HCT116 (cell line): ENCODE measurements at regions of chr2 and their contacts with region 1.

Region 1: DNA sequence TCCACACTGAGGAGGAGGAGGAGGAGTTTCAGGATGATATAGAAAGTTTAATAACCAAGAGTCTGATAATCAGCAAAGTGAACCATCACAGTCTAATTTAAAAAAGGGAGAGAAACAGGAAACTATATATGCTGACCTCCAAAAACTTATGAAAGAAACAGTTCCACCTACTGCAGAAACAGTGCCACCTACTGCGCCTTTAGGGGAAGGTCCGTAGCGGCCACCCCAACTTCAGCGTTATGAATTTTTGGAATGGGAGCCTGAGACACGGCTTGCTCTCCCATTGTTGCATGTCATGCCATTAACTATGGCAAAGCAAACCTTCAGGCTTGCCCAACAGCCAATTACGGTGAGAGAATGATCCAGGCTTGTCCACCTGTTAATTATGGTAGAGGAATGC is 1719.2 kb upstream of the LRRTM1 start:
- DNase-seq: no peak
- ATAC-seq: peak; percentile 77
- H3K4me3 ChIP-seq: no peak overlapping the region
- H3K27ac ChIP-seq: no peak overlapping the region
- H3K4me1 ChIP-seq: no peaks in the 10 kb centered on the region
- H3K27me3 ChIP-seq: no peaks in the 10 kb centered on the region
- CTCF ChIP-seq: peak; percentile 11 to 67 (median 62); a peak in 4 of 6 replicates
- POLR2A ChIP-seq: no peak
- RAD21 ChIP-seq: peak; percentile 47

Region 2: GRCh38 chr2:81324046-81324445 is 699.7 kb before region 1 on chr2:
- CTCF ChIA-PET with region 1: no interaction called
- POLR2A ChIA-PET with region 1: no interaction called
- RAD21 ChIA-PET with region 1: no interaction called
- intact Hi-C with region 1: loop called (anchors 10 kb)
- DNase-seq: peak; percentile 18
- ATAC-seq: peak; percentile 83
- H3K4me3 ChIP-seq: no peak overlapping the region
- H3K27ac ChIP-seq: no peak overlapping the region
- H3K4me1 ChIP-seq: no peaks in the 10 kb centered on the region
- H3K27me3 ChIP-seq: no peaks in the 10 kb centered on the region
- CTCF ChIP-seq: peak; percentile 32 to 58 (median 56); a peak in 5 of 6 replicates
- POLR2A ChIP-seq: no peak
- RAD21 ChIP-seq: peak; percentile 63